GM12878 (cell line): ENCODE measurements at regions of chr16 and their contacts with region 1.

Region 1: DNA sequence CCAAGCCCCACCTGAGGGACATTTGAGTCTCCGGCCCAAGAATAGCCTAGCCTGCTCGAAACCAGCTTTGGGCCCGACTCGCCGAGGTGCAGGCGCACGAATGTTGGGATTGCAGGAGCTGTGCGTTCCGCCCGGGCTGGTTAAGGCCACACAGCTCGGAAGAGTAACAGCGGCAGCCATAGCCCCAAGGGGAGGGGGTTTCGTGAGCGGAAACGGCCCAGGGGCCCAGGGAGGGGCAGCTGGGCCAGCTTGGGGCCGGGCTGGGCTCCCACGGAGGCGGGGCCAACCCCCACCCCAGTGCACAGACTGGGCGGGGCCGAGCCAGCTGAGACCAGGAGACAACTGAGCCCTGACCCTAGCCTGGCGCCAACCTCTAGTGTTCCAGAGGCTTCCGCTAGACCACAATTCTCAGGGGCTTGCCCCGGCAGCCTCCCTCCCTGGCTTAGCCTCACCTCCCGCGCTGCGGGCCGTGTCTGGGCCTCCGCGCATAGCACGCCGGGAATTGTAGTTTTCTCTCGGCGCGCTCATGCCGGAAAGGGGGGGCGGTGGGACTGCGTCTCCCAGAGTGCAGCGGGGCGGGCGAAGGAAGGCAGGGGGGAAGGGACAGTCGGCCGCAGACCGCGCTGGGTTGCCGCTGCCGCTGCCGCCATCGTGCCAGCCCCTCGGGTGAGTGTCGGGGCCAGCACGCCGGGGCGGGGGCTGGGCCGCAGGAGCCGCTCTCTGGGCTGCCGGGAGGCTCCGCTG is at the start of gene NUTF2:
- DNase-seq: peak; percentile 85
- ATAC-seq: peak; percentile 75
- H3K4me3 ChIP-seq: peak within 1 kb of the TSS; percentile 84
- H3K27ac ChIP-seq: peak within 1 kb of the TSS; percentile 81
- H3K4me1 ChIP-seq: peaks cover 28% of the 10 kb centered on the region
- H3K27me3 ChIP-seq: no peaks in the 10 kb centered on the region
- CTCF ChIP-seq: 0 out of 6 replicates have a peak, but pooled peaks of 1 of the 3 experiments have one; percentile 0
- EP300 ChIP-seq: peak in 1 of 2 experiments; percentile 10; a peak in 1 of 4 replicates
- POLR2A ChIP-seq: peak; percentile 88
- RAD21 ChIP-seq: no peak
- polyA plus RNA-seq, gene NUTF2: 220 to 245 TPM

Region 2: GRCh38 chr16:67546761-67547422 is 299.6 kb before region 1 on chr16:
- CTCF ChIA-PET with region 1: no interaction called
- POLR2A ChIA-PET with region 1: no interaction called
- RAD21 ChIA-PET with region 1: no interaction called
- SMC1A ChIA-PET with region 1: no interaction called
- in situ Hi-C with region 1: no loop called
- intact Hi-C with region 1: no loop called
- DNase-seq: no peak
- ATAC-seq: peak; percentile 74
- H3K4me3 ChIP-seq: no peak overlapping the region
- H3K27ac ChIP-seq: peak overlapping the region; percentile 87
- H3K4me1 ChIP-seq: peaks cover 28% of the 10 kb centered on the region
- H3K27me3 ChIP-seq: no peaks in the 10 kb centered on the region
- CTCF ChIP-seq: peak; percentile 98 to 99 (median 98); a peak in 5 of 6 replicates
- EP300 ChIP-seq: no peak
- POLR2A ChIP-seq: peak; percentile 18; the same call in 1 of the 2 replicates
- RAD21 ChIP-seq: peak; percentile 92

Region 3: DNA sequence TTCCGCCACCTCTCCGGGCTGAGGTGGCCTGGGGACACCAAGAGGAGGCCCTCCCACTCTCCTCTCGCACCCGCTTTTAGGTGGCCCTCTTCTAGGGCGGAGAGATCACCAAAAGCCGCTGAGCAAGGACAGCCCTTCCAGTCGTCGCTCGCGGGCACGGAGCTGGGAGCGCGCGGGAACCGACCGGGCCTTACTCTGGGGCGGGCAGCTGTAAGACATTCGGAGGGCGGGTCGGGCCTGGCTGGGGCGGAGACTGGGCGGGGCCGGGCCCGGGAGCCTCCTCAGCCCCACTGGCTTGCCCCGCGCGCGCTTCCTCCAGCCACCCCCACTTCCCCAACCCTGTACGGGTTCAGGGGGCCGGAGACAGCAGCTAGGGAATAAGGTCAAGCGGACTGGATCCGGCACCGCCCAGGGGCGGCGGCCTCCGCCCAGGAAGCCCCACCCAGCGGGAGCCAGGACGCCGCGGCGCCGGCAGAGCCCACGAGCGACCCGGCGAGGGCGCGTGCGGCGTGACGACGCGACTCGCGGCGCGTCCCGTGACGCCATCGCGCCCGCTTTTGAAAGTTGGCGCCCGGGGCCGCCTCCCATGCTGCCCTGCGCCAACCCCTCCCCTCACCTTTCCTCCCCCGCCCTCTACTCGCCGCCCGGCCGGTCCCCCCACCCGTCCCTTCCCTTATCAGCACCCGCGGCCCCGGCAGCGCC is 284.5 kb before region 1 on chr16:
- CTCF ChIA-PET with region 1: no interaction called
- POLR2A ChIA-PET with region 1: no interaction called
- RAD21 ChIA-PET with region 1: no interaction called
- SMC1A ChIA-PET with region 1: no interaction called
- in situ Hi-C with region 1: no loop called
- intact Hi-C with region 1: loop called (anchors 2 kb)
- DNase-seq: peak; percentile 89
- ATAC-seq: peak; percentile 91
- H3K4me3 ChIP-seq: peak overlapping the region; percentile 74
- H3K27ac ChIP-seq: peak overlapping the region; percentile 87
- H3K4me1 ChIP-seq: peaks cover 15% of the 10 kb centered on the region
- H3K27me3 ChIP-seq: no peaks in the 10 kb centered on the region
- CTCF ChIP-seq: no peak
- EP300 ChIP-seq: 0 out of 4 replicates have a peak, but pooled peaks of 1 of the 2 experiments have one; percentile 10
- POLR2A ChIP-seq: peak; percentile 83
- RAD21 ChIP-seq: no peak

Region 4: DNA sequence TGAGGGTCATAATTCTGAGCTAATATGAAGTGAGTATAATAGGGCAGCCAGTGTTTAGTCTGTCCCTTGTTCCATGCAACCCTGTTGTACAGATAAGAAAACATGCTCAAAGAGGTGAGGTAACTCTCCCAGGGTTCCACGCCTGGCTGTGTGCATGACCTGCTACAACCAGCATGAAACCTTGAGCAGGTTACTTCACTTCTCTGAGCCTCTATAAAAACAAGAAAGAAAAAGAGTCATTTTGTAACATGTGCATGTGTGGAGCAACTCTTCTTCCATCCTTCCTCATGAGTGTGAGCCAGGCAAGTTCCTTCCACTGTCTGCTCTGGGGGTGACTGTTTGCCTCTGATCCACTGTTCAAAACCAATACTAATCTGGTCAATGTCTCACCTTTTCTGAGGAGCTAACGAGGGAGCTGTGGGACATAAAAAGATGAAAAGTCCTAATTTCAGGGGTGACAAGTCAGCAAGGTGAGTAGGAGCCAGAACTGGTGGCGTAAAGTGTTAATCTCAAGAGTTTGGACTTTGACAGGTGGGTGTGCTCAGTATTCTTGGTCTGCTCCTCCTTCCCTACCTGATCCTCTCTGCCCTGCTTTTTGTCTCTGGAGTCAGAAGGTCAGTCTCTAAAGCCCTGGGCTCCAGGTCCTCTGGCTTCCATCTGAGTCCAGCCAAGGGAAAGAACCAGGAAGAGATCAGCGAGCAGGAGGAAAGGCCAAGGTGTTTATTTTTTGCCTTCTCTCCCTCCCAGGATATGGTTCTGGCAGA is 148.9 kb before region 1 on chr16:
- CTCF ChIA-PET with region 1: no interaction called
- POLR2A ChIA-PET with region 1: no interaction called
- RAD21 ChIA-PET with region 1: no interaction called
- SMC1A ChIA-PET with region 1: no interaction called
- in situ Hi-C with region 1: no loop called
- intact Hi-C with region 1: no loop called
- DNase-seq: no peak
- ATAC-seq: no peak
- H3K4me3 ChIP-seq: no peak overlapping the region
- H3K27ac ChIP-seq: no peak overlapping the region
- H3K4me1 ChIP-seq: no peaks in the 10 kb centered on the region
- H3K27me3 ChIP-seq: no peaks in the 10 kb centered on the region
- CTCF ChIP-seq: no peak
- EP300 ChIP-seq: no peak
- POLR2A ChIP-seq: no peak
- RAD21 ChIP-seq: no peak

Region 5: GRCh38 chr16:67773099-67773498 is 73.4 kb before region 1 on chr16:
- CTCF ChIA-PET with region 1: no interaction called
- POLR2A ChIA-PET with region 1: no interaction called
- RAD21 ChIA-PET with region 1: no interaction called
- SMC1A ChIA-PET with region 1: no interaction called
- in situ Hi-C with region 1: no loop called
- intact Hi-C with region 1: no loop called
- DNase-seq: no peak
- ATAC-seq: no peak
- H3K4me3 ChIP-seq: no peak overlapping the region
- H3K27ac ChIP-seq: no peak overlapping the region
- H3K4me1 ChIP-seq: no peaks in the 10 kb centered on the region
- H3K27me3 ChIP-seq: no peaks in the 10 kb centered on the region
- CTCF ChIP-seq: no peak
- EP300 ChIP-seq: no peak
- POLR2A ChIP-seq: no peak
- RAD21 ChIP-seq: no peak

Region 6: DNA sequence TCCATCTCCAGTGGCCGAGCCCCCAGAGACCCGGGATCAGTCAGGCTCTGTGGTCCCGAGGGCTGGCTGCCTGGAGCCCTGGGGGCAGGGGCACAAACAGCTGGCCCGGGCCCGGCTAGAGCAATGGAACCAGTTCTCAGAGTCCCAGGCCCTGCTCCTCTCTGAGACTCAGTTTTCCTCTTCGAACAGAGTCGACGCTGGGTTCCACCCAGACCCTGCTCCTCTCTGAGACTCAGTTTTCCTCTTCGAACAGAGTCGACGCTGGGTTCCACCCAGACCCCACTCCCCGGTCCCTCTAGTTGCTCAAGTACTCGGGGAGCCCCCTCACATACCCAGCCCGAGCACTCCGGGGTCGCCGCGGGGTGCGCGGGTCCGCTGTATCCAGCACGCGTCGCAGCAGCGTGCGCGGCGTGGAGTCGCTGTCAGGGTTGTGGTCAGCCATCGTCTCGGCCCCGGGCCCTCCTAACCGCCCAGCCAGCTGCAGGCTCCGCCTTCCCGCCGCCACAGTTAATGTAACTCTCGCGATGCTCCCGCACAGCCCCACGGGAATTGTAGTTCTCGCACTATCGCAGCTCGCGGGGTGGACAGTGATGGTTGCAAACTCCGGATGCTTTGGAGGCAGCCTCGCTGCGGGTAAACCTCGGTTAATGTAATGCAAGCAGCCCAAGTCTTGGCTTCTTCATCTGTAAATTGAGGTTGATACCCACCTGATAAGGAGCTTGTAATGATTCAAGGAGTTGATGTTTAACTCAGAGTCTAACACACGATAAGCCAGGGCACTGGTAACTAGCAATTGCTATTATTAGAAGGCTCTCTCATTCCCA is 12.9 kb before region 1 on chr16:
- CTCF ChIA-PET with region 1: interaction called, 8 read pairs
- POLR2A ChIA-PET with region 1: interaction called, 29 read pairs
- RAD21 ChIA-PET with region 1: interaction called, 6 read pairs
- SMC1A ChIA-PET with region 1: interaction called, 8 read pairs
- in situ Hi-C with region 1: no loop called
- intact Hi-C with region 1: no loop called
- DNase-seq: peak; percentile 83
- ATAC-seq: peak; percentile 100
- H3K4me3 ChIP-seq: peak overlapping the region; percentile 91
- H3K27ac ChIP-seq: peak overlapping the region; percentile 54
- H3K4me1 ChIP-seq: peaks cover 7% of the 10 kb centered on the region
- H3K27me3 ChIP-seq: no peaks in the 10 kb centered on the region
- CTCF ChIP-seq: no peak
- EP300 ChIP-seq: 0 out of 4 replicates have a peak, but pooled peaks of 1 of the 2 experiments have one; percentile 7
- POLR2A ChIP-seq: peak; percentile 97
- RAD21 ChIP-seq: no peak

Region 7: GRCh38 chr16:67872786-67873537 is 26.5 kb after region 1 on chr16 and contains the start of gene EDC4:
- CTCF ChIA-PET with region 1: interaction called, 3 read pairs
- POLR2A ChIA-PET with region 1: interaction called, 4 read pairs
- RAD21 ChIA-PET with region 1: interaction called, 3 read pairs
- SMC1A ChIA-PET with region 1: interaction called, 5 read pairs
- in situ Hi-C with region 1: no loop called
- intact Hi-C with region 1: loop called (anchors 1 kb)
- DNase-seq: peak; percentile 48
- ATAC-seq: peak; percentile 97
- H3K4me3 ChIP-seq: peak within 1 kb of the TSS; percentile 92
- H3K27ac ChIP-seq: peak within 1 kb of the TSS; percentile 78
- H3K4me1 ChIP-seq: peaks cover 10% of the 10 kb centered on the region
- H3K27me3 ChIP-seq: no peaks in the 10 kb centered on the region
- CTCF ChIP-seq: no peak
- EP300 ChIP-seq: no peak
- POLR2A ChIP-seq: peak; percentile 96
- RAD21 ChIP-seq: peak; percentile 11; the same call in 1 of the 2 replicates
- polyA plus RNA-seq, gene EDC4: 1.2 to 2.2 TPM

Region 8: DNA sequence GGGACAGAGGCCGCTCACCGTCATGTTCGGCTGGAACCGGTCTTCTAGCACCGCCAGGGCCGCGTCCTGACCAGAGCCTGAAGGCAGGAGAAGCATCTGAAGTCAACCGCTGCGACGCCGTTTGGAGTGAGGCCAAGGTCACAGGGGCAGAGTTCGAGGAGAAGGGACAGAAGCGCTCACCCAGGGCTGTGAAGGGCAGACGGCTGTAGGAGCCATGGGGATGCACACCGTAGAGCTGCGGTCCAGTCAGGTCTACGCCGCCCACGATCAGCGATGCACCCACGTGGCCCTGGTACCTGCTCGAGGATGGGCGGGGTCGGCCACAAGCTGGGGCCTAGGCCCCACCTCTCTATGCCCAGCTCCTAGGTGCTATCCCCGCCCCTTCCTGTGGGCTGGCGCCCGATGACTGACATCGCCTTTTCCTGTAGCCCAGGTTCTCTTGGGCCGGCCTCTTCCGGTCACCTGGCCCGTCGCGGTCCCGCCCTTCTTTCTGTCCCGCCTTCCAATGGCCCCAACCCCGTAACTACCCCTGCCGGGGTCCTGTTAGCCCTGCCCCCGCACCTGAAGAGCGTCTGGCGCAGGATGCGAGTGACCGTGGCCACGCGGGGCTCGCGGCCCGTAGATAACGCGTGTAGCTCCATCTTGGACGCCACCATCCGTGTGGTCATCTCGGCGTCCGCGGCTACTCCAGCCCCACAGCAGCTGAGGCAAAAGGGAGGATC is 89.1 kb after region 1 on chr16:
- CTCF ChIA-PET with region 1: interaction called, 5 read pairs
- POLR2A ChIA-PET with region 1: interaction called, 4 read pairs
- RAD21 ChIA-PET with region 1: interaction called, 3 read pairs
- SMC1A ChIA-PET with region 1: interaction called, 3 read pairs
- in situ Hi-C with region 1: no loop called
- intact Hi-C with region 1: loop called (anchors 2 kb)
- DNase-seq: peak; percentile 84
- ATAC-seq: peak; percentile 94
- H3K4me3 ChIP-seq: peak overlapping the region; percentile 89
- H3K27ac ChIP-seq: peak overlapping the region; percentile 98
- H3K4me1 ChIP-seq: peaks cover 12% of the 10 kb centered on the region
- H3K27me3 ChIP-seq: no peaks in the 10 kb centered on the region
- CTCF ChIP-seq: no peak
- EP300 ChIP-seq: no peak
- POLR2A ChIP-seq: peak; percentile 91
- RAD21 ChIP-seq: no peak

Region 9: GRCh38 chr16:67999985-68000384 is 153.5 kb after region 1 on chr16:
- CTCF ChIA-PET with region 1: no interaction called
- POLR2A ChIA-PET with region 1: no interaction called
- RAD21 ChIA-PET with region 1: no interaction called
- SMC1A ChIA-PET with region 1: no interaction called
- in situ Hi-C with region 1: no loop called
- intact Hi-C with region 1: no loop called
- DNase-seq: no peak
- ATAC-seq: peak; percentile 35; the same call in 2 of the 3 replicates
- H3K4me3 ChIP-seq: no peak overlapping the region
- H3K27ac ChIP-seq: no peak overlapping the region
- H3K4me1 ChIP-seq: peaks cover 24% of the 10 kb centered on the region
- H3K27me3 ChIP-seq: no peaks in the 10 kb centered on the region
- CTCF ChIP-seq: no peak
- EP300 ChIP-seq: no peak
- POLR2A ChIP-seq: no peak
- RAD21 ChIP-seq: no peak